ENCODE measurements at regions of chr9 and their contacts with region 1.

Region 1: GRCh38 chr9:124282442-124283227 is 24.9 kb downstream of the NEK6 start:
- DNase-seq: peak; percentile 78 to 88 (median 81)
- H3K4me3 ChIP-seq: no peak overlapping the region
- H3K27ac ChIP-seq: peak overlapping the region; percentile 58 to 75
- H3K4me1 ChIP-seq: peaks cover 52% of the 10 kb centered on the region
- H3K27me3 ChIP-seq: no peaks in the 10 kb centered on the region
- CTCF ChIP-seq: no peak
- EP300 ChIP-seq: no peak
- POLR2A ChIP-seq: peak; percentile 10

Region 2: DNA sequence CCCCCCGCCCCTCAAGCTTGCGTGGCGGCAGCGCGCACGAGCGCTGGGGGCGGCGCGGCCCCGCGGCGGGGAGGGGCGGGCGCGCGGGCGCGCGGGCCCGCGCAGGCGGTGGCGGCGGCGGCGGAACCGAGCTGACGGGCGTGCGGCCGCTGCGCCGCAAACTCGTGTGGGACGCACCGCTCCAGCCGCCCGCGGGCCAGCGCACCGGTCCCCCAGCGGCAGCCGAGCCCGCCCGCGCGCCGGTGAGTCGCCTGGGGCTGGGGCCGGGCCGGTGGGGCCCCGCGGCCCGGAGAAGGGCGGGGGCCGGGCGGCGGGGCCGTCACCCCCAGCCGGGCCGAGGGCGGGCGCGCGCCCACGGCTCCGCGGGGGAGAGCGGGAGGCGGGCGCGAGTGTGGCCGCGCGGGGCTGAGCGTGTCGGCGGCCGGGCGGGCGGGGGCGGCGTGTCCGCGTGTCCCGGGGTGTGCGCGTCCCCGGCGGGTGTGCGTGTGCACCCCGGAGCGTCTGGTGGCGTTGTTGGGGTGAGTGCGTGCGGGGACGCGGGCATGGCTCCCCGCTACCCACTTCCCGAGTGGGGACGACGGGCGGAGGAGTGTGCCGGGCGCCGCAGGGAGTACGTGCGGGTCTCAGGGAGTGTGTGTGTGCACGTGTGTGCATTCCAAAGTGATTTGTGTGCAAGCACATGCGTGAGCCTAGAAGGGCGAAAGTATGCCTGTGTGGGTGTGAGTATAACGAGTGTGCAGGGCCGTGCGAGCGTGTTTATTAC is 24.6 kb before region 1 on chr9 and contains the start of gene NEK6:
- intact Hi-C with region 1: loop called in 1 of 4 experiments (anchors 2 kb)
- DNase-seq: peak; percentile 30 to 62 (median 51)
- H3K4me3 ChIP-seq: peak within 1 kb of the TSS; percentile 52
- H3K27ac ChIP-seq: peak within 1 kb of the TSS; percentile 1 to 50
- H3K4me1 ChIP-seq: peaks cover 20% of the 10 kb centered on the region
- H3K27me3 ChIP-seq: no peaks in the 10 kb centered on the region
- CTCF ChIP-seq: no peak
- EP300 ChIP-seq: no peak
- POLR2A ChIP-seq: no peak
- total RNA-seq, gene NEK6: 7.2 to 45.1 (median 22.8) TPM

Measured in ovary (tissue), 10 donors.